ENCODE measurements at regions of chr5 and their contacts with region 1.

Region 1: DNA sequence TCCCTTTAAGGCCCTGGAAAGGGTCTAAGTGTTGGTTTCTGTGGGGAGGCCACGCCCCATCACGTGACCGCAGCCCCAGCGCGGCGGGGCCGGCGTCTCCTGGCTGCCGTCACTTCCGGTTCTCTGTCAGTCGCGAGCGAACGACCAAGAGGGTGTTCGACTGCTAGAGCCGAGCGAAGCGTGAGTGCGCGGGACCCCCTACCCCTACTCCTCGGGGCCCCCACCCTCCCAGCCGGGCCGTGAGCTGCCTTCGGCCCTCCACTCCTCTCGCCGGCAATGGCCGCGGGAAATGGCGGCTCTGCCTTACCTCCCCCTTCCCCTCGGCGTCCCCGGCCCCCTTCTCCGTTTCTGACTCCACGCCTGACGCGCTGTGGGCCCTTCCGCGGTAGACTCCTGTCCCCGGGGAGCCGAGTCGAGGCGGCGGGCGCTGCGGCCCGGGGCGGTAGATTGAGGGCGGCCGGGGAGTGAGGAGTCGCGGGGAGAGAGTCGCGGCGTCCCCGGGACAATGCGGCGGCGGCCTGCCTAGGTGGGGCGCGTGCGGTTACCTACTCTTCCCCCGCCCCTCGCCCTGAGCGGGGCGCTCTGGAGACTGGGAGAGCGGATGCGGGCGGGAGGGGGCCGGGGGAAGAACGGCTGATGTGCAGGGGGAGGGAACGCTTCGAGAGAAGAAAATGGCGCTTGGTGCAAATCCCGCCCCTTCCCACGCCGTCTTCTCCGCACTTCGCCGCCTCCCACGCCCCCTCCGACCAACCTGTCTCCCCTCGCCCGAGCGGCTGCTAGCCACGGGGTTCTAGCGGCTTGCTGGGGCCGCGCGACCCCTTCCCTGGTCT is at the start of gene SUB1:
- DNase-seq: peak; percentile 94
- H3K4me3 Mint-ChIP-seq: peak within 1 kb of the TSS; percentile 99
- H3K27ac Mint-ChIP-seq: peak within 1 kb of the TSS; percentile 99
- H3K4me1 Mint-ChIP-seq: peaks cover 54% of the 10 kb centered on the region
- H3K27me3 Mint-ChIP-seq: no peaks in the 10 kb centered on the region
- total RNA-seq, gene SUB1: 397 to 400 TPM

Region 2: GRCh38 chr5:32174011-32174870 is 411.4 kb before region 1 on chr5 and contains the start of gene GOLPH3:
- CTCF ChIA-PET with region 1: no interaction called
- intact Hi-C with region 1: loop called (anchors 1 kb)
- DNase-seq: peak; percentile 96
- H3K4me3 Mint-ChIP-seq: peak within 1 kb of the TSS; percentile 99
- H3K27ac Mint-ChIP-seq: peak within 1 kb of the TSS; percentile 95
- H3K4me1 Mint-ChIP-seq: peaks cover 32% of the 10 kb centered on the region
- H3K27me3 Mint-ChIP-seq: no peaks in the 10 kb centered on the region
- total RNA-seq, gene GOLPH3: 38.2 to 41.5 TPM

Region 3: GRCh38 chr5:32312647-32313523 is 272.8 kb before region 1 on chr5 and contains the start of gene MTMR12:
- CTCF ChIA-PET with region 1: no interaction called
- intact Hi-C with region 1: loop called (anchors 1 kb)
- DNase-seq: peak; percentile 100
- H3K4me3 Mint-ChIP-seq: peak within 1 kb of the TSS; percentile 84
- H3K27ac Mint-ChIP-seq: peak within 1 kb of the TSS; percentile 84
- H3K4me1 Mint-ChIP-seq: peaks cover 27% of the 10 kb centered on the region
- H3K27me3 Mint-ChIP-seq: no peaks in the 10 kb centered on the region
- total RNA-seq, gene MTMR12: 14.1 to 16.0 TPM

Region 4: GRCh38 chr5:32489791-32490582 is 95.7 kb before region 1 on chr5:
- CTCF ChIA-PET with region 1: interaction called, 239 read pairs
- intact Hi-C with region 1: loop called (anchors 1 kb)
- DNase-seq: peak; percentile 83
- H3K4me3 Mint-ChIP-seq: no peak overlapping the region
- H3K27ac Mint-ChIP-seq: no peak overlapping the region
- H3K4me1 Mint-ChIP-seq: peaks cover 1% of the 10 kb centered on the region
- H3K27me3 Mint-ChIP-seq: no peaks in the 10 kb centered on the region

Region 5: GRCh38 chr5:32531885-32532520 is 53.7 kb before region 1 on chr5:
- CTCF ChIA-PET with region 1: interaction called, 16 read pairs
- intact Hi-C with region 1: loop called (anchors 1 kb)
- DNase-seq: peak; percentile 78
- H3K4me3 Mint-ChIP-seq: peak overlapping the region; percentile 83
- H3K27ac Mint-ChIP-seq: peak overlapping the region; percentile 98
- H3K4me1 Mint-ChIP-seq: peaks cover 41% of the 10 kb centered on the region
- H3K27me3 Mint-ChIP-seq: no peaks in the 10 kb centered on the region

Region 6: DNA sequence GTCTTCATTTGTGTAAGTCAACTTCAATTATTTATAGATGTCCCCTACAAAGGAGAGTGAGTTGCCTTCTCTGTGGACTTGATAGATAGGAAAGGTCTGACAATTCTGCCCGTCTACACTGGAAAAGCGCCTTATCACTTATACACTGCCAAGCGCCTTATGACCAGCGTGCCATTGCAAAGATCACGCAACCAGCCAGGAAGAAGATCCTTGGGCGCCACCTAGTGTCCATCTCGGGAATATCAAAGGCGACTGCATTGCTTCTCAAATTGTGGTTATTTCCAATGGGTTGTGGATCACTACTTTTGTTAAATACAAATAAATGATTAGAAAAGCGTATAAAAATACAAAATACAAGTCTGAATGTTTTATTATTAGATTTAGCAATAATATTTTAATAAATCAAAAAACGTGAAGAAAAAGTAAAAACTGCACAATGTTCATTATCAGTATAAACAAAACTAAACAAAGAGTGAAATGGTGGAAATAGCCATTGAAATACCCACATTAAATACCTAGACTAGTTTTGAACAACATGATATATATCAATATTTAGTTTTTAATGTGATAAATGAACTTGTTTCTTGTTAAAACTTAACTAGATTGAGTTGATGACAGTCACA is 27.5 kb after region 1 on chr5:
- CTCF ChIA-PET with region 1: interaction called, 12 read pairs
- intact Hi-C with region 1: no loop called
- DNase-seq: peak; percentile 94
- H3K4me3 Mint-ChIP-seq: no peak overlapping the region
- H3K27ac Mint-ChIP-seq: no peak overlapping the region
- H3K4me1 Mint-ChIP-seq: peaks cover 3% of the 10 kb centered on the region
- H3K27me3 Mint-ChIP-seq: no peaks in the 10 kb centered on the region

Measured in activated naive CD4-positive, alpha-beta T cell treated with anti-CD3 and anti-CD28 coated beads for 36 hours (primary cell).